Head of caudate nucleus (tissue), 42 donors: ENCODE measurements at regions of chr7 and their contacts with region 1.

Region 1: GRCh38 chr7:151028131-151028947 is at the start of gene ABCB8:
- DNase-seq: peak; percentile 92 to 99 (median 98)

Region 2: GRCh38 chr7:151057989-151058780 is 29.8 kb after region 1 on chr7:
- intact Hi-C with region 1: loop called (anchors 2 kb)
- DNase-seq: peak; percentile 97 to 100 (median 100)

Region 3: GRCh38 chr7:151110941-151111645 is 82.8 kb after region 1 on chr7:
- intact Hi-C with region 1: loop called (anchors 5 kb)
- DNase-seq: peak; percentile 62 to 93 (median 82)